Endothelial cell of umbilical vein (primary cell): ENCODE measurements at regions of chr5 and their contacts with region 1.

Region 1: GRCh38 chr5:123671042-123671441 is 159.1 kb downstream of the CSNK1G3 start:
- DNase-seq: peak; percentile 68
- H3K4me3 ChIP-seq: no peak overlapping the region
- H3K27ac ChIP-seq: no peak overlapping the region
- H3K4me1 ChIP-seq: no peaks in the 10 kb centered on the region
- H3K27me3 ChIP-seq: no peaks in the 10 kb centered on the region
- CTCF ChIP-seq: peak; percentile 52 to 57
- POLR2A ChIP-seq: no peak

Region 2: GRCh38 chr5:123813937-123814624 is 143.0 kb after region 1 on chr5:
- CTCF ChIA-PET with region 1: interaction called, 3 read pairs
- POLR2A ChIA-PET with region 1: no interaction called
- dilution Hi-C with region 1: no loop called
- intact Hi-C with region 1: loop called (anchors 2 kb)
- DNase-seq: peak; percentile 93
- H3K4me3 ChIP-seq: peak overlapping the region in 1 of 3 experiments; percentile 6
- H3K27ac ChIP-seq: peak overlapping the region; percentile 51
- H3K4me1 ChIP-seq: peaks cover 13% of the 10 kb centered on the region
- H3K27me3 ChIP-seq: no peaks in the 10 kb centered on the region
- CTCF ChIP-seq: no peak
- POLR2A ChIP-seq: no peak

Region 3: GRCh38 chr5:123881759-123882244 is 210.8 kb after region 1 on chr5:
- CTCF ChIA-PET with region 1: interaction called, 3 read pairs
- POLR2A ChIA-PET with region 1: no interaction called
- dilution Hi-C with region 1: no loop called
- intact Hi-C with region 1: loop called (anchors 5 kb)
- DNase-seq: peak; percentile 90
- H3K4me3 ChIP-seq: peak overlapping the region in 1 of 3 experiments; percentile 58
- H3K27ac ChIP-seq: peak overlapping the region; percentile 48
- H3K4me1 ChIP-seq: peaks cover 27% of the 10 kb centered on the region
- H3K27me3 ChIP-seq: peaks cover 3 to 7% of the 10 kb centered on the region in 2 experiments
- CTCF ChIP-seq: no peak
- POLR2A ChIP-seq: no peak

Region 4: GRCh38 chr5:123937230-123937629 is 266.2 kb after region 1 on chr5:
- CTCF ChIA-PET with region 1: interaction called, 4 read pairs
- POLR2A ChIA-PET with region 1: no interaction called
- dilution Hi-C with region 1: no loop called
- intact Hi-C with region 1: loop called (anchors 1 kb)
- DNase-seq: peak; percentile 68
- H3K4me3 ChIP-seq: no peak overlapping the region
- H3K27ac ChIP-seq: no peak overlapping the region
- H3K4me1 ChIP-seq: no peaks in the 10 kb centered on the region
- H3K27me3 ChIP-seq: no peaks in the 10 kb centered on the region
- CTCF ChIP-seq: peak; percentile 51 to 62
- POLR2A ChIP-seq: no peak

Region 5: DNA sequence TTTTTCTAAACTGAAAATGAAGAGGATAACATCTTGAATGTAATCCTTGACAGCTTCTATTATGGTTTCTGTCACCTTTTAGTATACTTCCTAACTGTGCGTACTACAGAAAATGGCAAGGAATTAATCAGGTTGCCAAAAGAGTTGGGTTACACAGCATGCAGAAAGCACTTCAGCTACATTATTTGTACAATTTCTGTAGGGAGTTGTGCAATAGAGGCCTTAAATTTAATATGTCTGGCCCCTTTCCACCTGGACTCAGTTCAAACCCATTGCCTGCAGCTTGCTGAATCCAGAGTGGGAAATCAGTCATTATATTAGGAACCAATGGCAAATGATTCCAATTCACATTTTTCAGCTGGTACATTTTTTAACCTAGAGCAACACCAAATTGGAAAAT is 390.6 kb after region 1 on chr5:
- CTCF ChIA-PET with region 1: no interaction called
- POLR2A ChIA-PET with region 1: no interaction called
- dilution Hi-C with region 1: no loop called
- intact Hi-C with region 1: loop called (anchors 10 kb)
- DNase-seq: no peak
- H3K4me3 ChIP-seq: no peak overlapping the region
- H3K27ac ChIP-seq: no peak overlapping the region
- H3K4me1 ChIP-seq: peaks cover 15% of the 10 kb centered on the region
- H3K27me3 ChIP-seq: no peaks in the 10 kb centered on the region
- CTCF ChIP-seq: no peak
- POLR2A ChIP-seq: no peak

Region 6: GRCh38 chr5:124134941-124135340 is 463.9 kb after region 1 on chr5:
- CTCF ChIA-PET with region 1: no interaction called
- POLR2A ChIA-PET with region 1: no interaction called
- dilution Hi-C with region 1: no loop called
- intact Hi-C with region 1: loop called (anchors 5 kb)
- DNase-seq: no peak
- H3K4me3 ChIP-seq: no peak overlapping the region
- H3K27ac ChIP-seq: no peak overlapping the region
- H3K4me1 ChIP-seq: no peaks in the 10 kb centered on the region
- H3K27me3 ChIP-seq: no peaks in the 10 kb centered on the region
- CTCF ChIP-seq: no peak
- POLR2A ChIP-seq: no peak